ENCODE measurements at regions of chr6 and their contacts with region 1.

Region 1: GRCh38 chr6:113980937-113981554 is 10.1 kb upstream of the HDAC2 start:
- DNase-seq: no peak
- H3K4me3 Mint-ChIP-seq: no peak overlapping the region
- H3K27ac Mint-ChIP-seq: no peak overlapping the region
- H3K4me1 Mint-ChIP-seq: no peaks in the 10 kb centered on the region
- H3K27me3 Mint-ChIP-seq: no peaks in the 10 kb centered on the region

Region 2: DNA sequence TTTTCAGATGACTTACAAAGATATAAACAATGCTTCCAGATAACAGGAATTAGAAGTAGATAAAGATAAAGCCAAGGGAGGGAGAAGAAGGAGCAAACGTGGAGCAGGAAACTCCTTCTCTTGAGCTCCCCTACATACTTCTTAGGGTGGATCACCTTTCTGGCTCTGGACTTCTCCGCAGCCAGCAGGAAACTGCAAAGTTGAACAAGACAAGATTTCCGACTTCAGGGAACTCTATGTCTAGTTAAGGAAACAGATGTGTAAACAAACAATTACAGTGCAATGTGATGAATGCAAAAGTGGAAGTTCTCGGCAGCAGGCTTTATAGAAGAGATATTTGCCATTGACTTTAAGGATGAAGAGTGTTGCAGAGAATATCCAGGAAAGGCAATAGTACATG is 257.9 kb before region 1 on chr6:
- CTCF ChIA-PET with region 1: no interaction called
- POLR2A ChIA-PET with region 1: no interaction called
- DNase-seq: no peak
- H3K4me3 Mint-ChIP-seq: no peak overlapping the region
- H3K27ac Mint-ChIP-seq: no peak overlapping the region
- H3K4me1 Mint-ChIP-seq: no peaks in the 10 kb centered on the region
- H3K27me3 Mint-ChIP-seq: peaks cover 2% of the 10 kb centered on the region

Region 3: DNA sequence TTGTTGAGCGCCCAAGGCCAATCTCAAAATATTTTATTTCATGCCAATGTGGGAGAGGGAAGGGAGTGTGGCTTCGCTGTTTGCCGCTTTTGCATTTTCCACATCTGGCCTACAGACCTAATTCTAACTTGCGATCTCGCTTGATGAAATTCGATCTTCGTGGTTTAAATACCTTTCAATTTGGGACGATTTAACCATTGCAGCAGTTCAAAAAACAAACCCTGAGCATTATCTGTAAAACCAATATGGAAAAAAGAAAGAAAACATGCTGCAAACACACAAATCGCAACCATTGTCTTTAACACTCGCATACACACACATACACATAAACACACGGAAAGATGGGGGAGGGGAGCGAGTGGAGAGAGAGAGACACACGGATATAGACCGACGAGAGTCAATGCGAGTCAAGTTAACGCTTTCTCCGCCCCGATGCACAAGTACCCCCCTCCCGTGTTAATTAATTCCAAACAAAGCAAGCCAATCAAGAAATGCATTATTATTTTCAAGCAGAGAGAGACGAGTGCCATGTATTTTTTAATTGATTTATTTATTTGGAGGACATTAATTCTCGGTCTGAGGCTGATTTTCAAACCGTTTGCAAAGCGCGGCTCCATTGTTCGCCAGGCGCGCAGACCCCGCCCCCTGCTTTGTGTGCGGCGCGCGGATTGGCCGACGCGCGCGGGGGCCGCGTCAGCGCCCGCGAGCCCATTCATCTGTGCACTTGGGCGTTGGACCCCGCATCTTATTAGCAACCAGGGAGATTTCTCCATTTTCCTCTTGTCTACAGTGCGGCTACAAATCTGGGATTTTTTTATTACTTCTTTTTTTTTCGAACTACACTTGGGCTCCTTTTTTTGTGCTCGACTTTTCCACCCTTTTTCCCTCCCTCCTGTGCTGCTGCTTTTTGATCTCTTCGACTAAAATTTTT is 124.2 kb before region 1 on chr6 and contains the start of gene MARCKS:
- CTCF ChIA-PET with region 1: no interaction called
- POLR2A ChIA-PET with region 1: no interaction called
- DNase-seq: peak; percentile 38
- H3K4me3 Mint-ChIP-seq: no peak within 1 kb of the TSS
- H3K27ac Mint-ChIP-seq: no peak within 1 kb of the TSS
- H3K4me1 Mint-ChIP-seq: peaks cover 20% of the 10 kb centered on the region
- H3K27me3 Mint-ChIP-seq: peaks cover 37% of the 10 kb centered on the region
- total RNA-seq, gene MARCKS: 0.05 TPM in 1 of 2 experiments, not detected in the other

Region 4: GRCh38 chr6:113970805-113971676 is 10.0 kb before region 1 on chr6 and contains the start of gene HDAC2:
- CTCF ChIA-PET with region 1: interaction called, 13 read pairs
- POLR2A ChIA-PET with region 1: interaction called, 7 read pairs
- DNase-seq: peak; percentile 85
- H3K4me3 Mint-ChIP-seq: peak within 1 kb of the TSS; percentile 93
- H3K27ac Mint-ChIP-seq: peak within 1 kb of the TSS; percentile 92
- H3K4me1 Mint-ChIP-seq: peaks cover 22% of the 10 kb centered on the region
- H3K27me3 Mint-ChIP-seq: no peaks in the 10 kb centered on the region
- total RNA-seq, gene HDAC2: 64.0 to 64.8 TPM

Region 5: DNA sequence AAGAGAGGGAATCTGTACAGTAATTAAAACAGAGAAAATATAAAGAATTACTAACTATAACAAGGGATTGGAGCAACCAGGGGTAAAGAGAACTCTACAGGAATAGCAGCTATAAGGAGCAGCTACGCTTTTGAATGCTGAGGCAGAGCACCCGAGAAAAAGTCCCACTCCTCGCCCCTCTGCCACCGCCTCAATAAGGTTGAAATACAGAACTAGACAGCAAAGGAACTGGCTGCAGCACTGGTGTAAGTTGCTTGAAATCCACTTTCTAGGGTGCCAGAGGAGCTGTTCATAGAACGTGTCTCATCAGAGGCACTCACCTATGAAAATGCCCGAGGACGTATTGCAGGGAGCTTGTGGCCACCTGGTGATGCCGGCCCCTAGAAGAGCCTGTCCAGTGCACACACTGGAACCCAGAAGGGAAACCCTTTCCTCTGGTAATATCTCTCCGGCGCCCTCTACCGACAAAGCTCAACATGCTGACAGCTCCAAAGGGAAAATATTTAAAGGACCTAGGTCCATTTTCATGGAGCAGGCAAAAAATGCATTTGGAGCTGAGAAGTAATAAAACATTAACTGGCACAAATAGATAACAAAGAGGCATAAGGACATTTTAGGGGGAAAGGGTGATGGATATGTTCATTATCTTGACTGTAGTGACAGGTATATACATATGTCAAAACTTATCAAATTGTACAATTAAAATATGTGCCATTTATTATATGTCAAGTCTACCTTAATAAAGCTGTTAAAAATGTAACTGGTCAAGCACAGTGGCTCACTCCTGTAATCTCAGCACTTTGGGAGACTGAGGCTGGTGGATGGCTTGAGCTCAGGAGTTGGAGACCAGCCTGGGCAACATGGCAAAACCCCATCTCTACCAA is 127.3 kb after region 1 on chr6:
- CTCF ChIA-PET with region 1: interaction called, 18 read pairs
- POLR2A ChIA-PET with region 1: no interaction called
- DNase-seq: peak; percentile 42
- H3K4me3 Mint-ChIP-seq: no peak overlapping the region
- H3K27ac Mint-ChIP-seq: no peak overlapping the region
- H3K4me1 Mint-ChIP-seq: no peaks in the 10 kb centered on the region
- H3K27me3 Mint-ChIP-seq: peaks cover 11% of the 10 kb centered on the region